ENCODE measurements at regions of chr3 and their contacts with region 1.

Region 1: DNA sequence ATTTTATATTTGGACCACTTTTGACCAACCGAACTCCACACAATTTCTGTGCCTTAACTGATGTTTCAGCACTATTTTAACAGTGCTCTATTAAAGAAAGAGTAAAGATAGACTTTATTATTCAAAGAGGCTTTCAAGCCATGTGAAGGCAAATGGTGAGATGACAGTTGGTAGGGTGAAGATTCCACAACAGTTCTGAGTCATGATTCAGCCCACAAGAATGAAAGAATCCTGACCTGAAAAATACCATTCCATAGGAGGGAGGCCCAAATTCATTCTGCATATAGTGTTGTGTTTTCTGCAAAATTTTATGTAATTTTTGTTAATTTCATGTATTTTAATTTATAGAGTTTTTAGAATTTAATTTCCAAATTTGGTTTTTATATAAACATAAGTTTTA is 135.6 kb upstream of the STAC start:
- DNase-seq: peak; percentile 32
- H3K4me3 ChIP-seq: no peak overlapping the region
- H3K27ac ChIP-seq: no peak overlapping the region
- H3K4me1 ChIP-seq: no peaks in the 10 kb centered on the region
- H3K27me3 ChIP-seq: no peaks in the 10 kb centered on the region
- CTCF ChIP-seq: no peak

Region 2: GRCh38 chr3:36164400-36164799 is 80.3 kb before region 1 on chr3:
- CTCF ChIA-PET with region 1: no interaction called
- dilution Hi-C with region 1: loop called (anchors 5 kb)
- in situ Hi-C with region 1: no loop called
- intact Hi-C with region 1: no loop called
- DNase-seq: peak; percentile 47
- H3K4me3 ChIP-seq: no peak overlapping the region
- H3K27ac ChIP-seq: peak overlapping the region; percentile 1
- H3K4me1 ChIP-seq: peaks cover 28% of the 10 kb centered on the region
- H3K27me3 ChIP-seq: no peaks in the 10 kb centered on the region
- CTCF ChIP-seq: no peak

Region 3: GRCh38 chr3:36393563-36393962 is 148.8 kb after region 1 on chr3:
- CTCF ChIA-PET with region 1: no interaction called
- dilution Hi-C with region 1: no loop called
- in situ Hi-C with region 1: no loop called
- intact Hi-C with region 1: no loop called
- DNase-seq: no peak
- H3K4me3 ChIP-seq: no peak overlapping the region
- H3K27ac ChIP-seq: no peak overlapping the region
- H3K4me1 ChIP-seq: no peaks in the 10 kb centered on the region
- H3K27me3 ChIP-seq: no peaks in the 10 kb centered on the region
- CTCF ChIP-seq: no peak

Region 4: DNA sequence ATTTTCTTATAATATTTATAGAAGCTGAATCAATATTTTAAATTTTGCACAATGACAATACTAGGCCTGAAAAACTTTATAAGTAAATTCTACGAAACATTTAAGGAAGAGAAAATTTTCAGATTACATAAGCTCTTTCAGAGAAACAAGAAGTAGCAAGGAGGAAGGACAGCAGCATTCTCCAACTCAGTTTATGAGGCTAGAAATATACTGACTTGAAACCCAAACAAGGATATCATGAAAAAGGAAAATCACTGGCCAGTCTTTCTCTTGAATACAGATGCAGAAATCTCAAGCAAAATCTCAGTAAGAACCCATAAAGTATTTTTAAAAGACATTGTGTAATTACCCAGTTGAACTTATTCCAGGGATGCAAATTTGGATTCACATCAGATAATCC is 256.9 kb after region 1 on chr3:
- CTCF ChIA-PET with region 1: no interaction called
- dilution Hi-C with region 1: no loop called
- in situ Hi-C with region 1: no loop called
- intact Hi-C with region 1: no loop called
- DNase-seq: no peak
- H3K4me3 ChIP-seq: no peak overlapping the region
- H3K27ac ChIP-seq: no peak overlapping the region
- H3K4me1 ChIP-seq: peaks cover 9% of the 10 kb centered on the region
- H3K27me3 ChIP-seq: no peaks in the 10 kb centered on the region
- CTCF ChIP-seq: no peak